Natural killer cell (primary cell): ENCODE measurements at regions of chr3 and their contacts with region 1.

Region 1: DNA sequence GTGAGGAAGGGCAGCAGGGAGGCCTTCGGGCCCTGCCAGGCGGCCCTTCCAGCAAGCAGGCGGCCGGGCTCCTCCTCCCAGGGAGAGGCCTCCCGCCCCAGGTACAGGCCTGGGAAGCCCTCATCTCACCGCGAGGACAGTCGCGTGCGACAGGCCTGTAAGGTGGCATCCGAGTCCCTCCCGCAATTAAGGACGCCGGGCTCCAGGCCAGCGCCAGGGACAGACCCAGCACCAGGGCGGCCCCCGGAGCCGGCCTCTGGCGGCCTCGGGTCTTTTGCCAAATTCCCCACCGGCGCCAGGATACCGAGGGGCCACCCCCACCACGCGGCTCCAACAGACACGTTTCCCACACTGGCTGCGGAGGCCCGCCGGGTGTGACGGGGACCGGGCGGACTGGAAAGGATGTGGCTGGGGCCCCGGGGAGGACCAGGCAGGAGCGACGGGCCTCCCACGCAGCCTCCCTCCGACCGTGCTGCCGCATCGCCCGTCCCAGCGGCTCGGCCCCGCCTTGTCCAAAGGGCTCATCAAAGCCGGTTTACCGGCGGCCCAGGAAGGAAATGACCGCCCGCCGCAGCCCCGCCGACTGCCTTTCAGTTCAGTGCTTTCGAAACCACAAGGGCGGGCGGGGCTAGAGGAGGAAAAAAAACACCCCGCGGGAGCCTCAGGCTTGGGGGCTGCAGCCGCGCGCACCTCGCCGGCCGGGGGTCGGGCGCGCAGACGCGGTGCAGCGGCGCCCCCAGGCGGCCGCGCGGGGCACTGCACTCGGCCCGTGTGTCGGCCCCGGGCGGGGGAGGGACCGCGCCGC is 11.3 kb downstream of the XXYLT1 start:
- DNase-seq: peak; percentile 91 to 94
- ATAC-seq: peak; percentile 86 to 95 (median 89)
- H3K4me3 ChIP-seq: peak overlapping the region; percentile 34
- H3K4me3 Mint-ChIP-seq: peak overlapping the region; percentile 72
- H3K27ac ChIP-seq: peak overlapping the region; percentile 91
- H3K27ac Mint-ChIP-seq: peak overlapping the region; percentile 83 to 84
- H3K4me1 ChIP-seq: peaks cover 25% of the 10 kb centered on the region
- H3K4me1 Mint-ChIP-seq: peaks cover 14 to 23% of the 10 kb centered on the region in 2 donors
- H3K27me3 ChIP-seq: no peaks in the 10 kb centered on the region
- H3K27me3 Mint-ChIP-seq: no peaks in the 10 kb centered on the region
- CTCF ChIP-seq: peak; percentile 71

Region 2: DNA sequence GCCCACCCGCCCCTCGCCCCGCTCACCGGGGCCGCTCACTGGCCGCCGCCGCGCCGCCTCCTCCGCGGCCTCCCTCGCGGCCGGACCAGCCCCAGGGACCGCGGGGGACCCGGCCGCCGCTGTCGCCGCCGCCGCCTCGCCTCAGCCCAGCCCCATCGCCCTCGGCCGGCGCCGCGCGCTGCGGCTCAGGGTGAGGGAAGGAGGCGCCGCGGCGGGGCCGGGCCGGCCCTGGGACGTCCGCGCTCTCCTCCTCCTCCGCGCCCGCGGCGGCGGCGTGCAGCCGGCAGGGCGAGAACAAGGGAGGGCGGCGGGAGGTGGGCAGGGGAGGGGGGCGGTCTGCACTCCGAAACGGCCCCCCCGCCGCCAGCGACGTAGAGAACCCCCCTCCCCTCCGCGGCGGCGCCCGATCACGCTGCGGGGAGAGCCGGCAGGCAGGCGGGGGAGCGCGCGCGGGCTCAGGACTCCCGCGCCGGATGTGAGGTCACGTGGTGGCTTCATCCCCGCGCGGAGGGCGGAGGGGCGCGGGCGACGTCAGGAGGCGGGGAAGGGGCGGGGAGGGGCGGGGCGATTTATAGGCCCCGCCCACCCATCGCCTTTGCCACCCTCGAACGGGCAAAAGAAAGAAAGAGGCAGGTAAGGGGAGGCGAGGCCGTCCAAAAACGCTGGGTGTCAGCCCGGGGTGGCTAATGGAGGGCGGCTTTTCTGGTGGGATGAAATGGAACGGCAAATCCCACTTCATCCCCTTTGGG is 773.0 kb before region 1 on chr3 and contains the start of gene ATP13A3:
- intact Hi-C with region 1: loop called (anchors 10 kb)
- DNase-seq: peak; percentile 87 to 96
- ATAC-seq: peak; percentile 77 to 94 (median 82)
- H3K4me3 ChIP-seq: peak within 1 kb of the TSS; percentile 64
- H3K4me3 Mint-ChIP-seq: peak within 1 kb of the TSS; percentile 95
- H3K27ac ChIP-seq: peak within 1 kb of the TSS; percentile 87
- H3K27ac Mint-ChIP-seq: peak within 1 kb of the TSS; percentile 89 to 90
- H3K4me1 ChIP-seq: peaks cover 31% of the 10 kb centered on the region
- H3K4me1 Mint-ChIP-seq: peaks cover 34 to 40% of the 10 kb centered on the region in 2 donors
- H3K27me3 ChIP-seq: no peaks in the 10 kb centered on the region
- H3K27me3 Mint-ChIP-seq: no peaks in the 10 kb centered on the region
- CTCF ChIP-seq: no peak
- total RNA-seq, gene ATP13A3: 62.9 to 79.2 (median 64.2) TPM

Region 3: GRCh38 chr3:194671900-194672808 is 587.5 kb before region 1 on chr3 and contains the start of gene LSG1:
- intact Hi-C with region 1: loop called (anchors 2 kb)
- DNase-seq: peak; percentile 87 to 97
- ATAC-seq: peak; percentile 96
- H3K4me3 ChIP-seq: peak within 1 kb of the TSS; percentile 97
- H3K4me3 Mint-ChIP-seq: peak within 1 kb of the TSS; percentile 98
- H3K27ac ChIP-seq: peak within 1 kb of the TSS; percentile 98
- H3K27ac Mint-ChIP-seq: peak within 1 kb of the TSS; percentile 98 to 99
- H3K4me1 ChIP-seq: peaks cover 14% of the 10 kb centered on the region
- H3K4me1 Mint-ChIP-seq: peaks cover 29 to 40% of the 10 kb centered on the region in 2 donors
- H3K27me3 ChIP-seq: no peaks in the 10 kb centered on the region
- H3K27me3 Mint-ChIP-seq: peaks cover 0 to 6% of the 10 kb centered on the region in 2 donors
- CTCF ChIP-seq: no peak
- total RNA-seq, gene LSG1: 56.4 to 67.6 (median 64.9) TPM

Region 4: GRCh38 chr3:195001961-195002861 is 257.5 kb before region 1 on chr3:
- intact Hi-C with region 1: loop called (anchors 10 kb)
- DNase-seq: peak in 1 of 2 donors; percentile 41
- ATAC-seq: peak in 1 of 3 donors; percentile 68
- H3K4me3 ChIP-seq: no peak overlapping the region
- H3K4me3 Mint-ChIP-seq: no peak overlapping the region
- H3K27ac ChIP-seq: no peak overlapping the region
- H3K27ac Mint-ChIP-seq: no peak overlapping the region
- H3K4me1 ChIP-seq: peaks cover 18% of the 10 kb centered on the region
- H3K4me1 Mint-ChIP-seq: no peaks in the 10 kb centered on the region
- H3K27me3 ChIP-seq: no peaks in the 10 kb centered on the region
- H3K27me3 Mint-ChIP-seq: peaks cover 7 to 12% of the 10 kb centered on the region in 2 donors
- CTCF ChIP-seq: no peak

Region 5: GRCh38 chr3:195063581-195064193 is 196.0 kb before region 1 on chr3:
- intact Hi-C with region 1: no loop called
- DNase-seq: no peak
- ATAC-seq: no peak
- H3K4me3 ChIP-seq: no peak overlapping the region
- H3K4me3 Mint-ChIP-seq: no peak overlapping the region
- H3K27ac ChIP-seq: no peak overlapping the region
- H3K27ac Mint-ChIP-seq: no peak overlapping the region
- H3K4me1 ChIP-seq: peaks cover 7% of the 10 kb centered on the region
- H3K4me1 Mint-ChIP-seq: peaks cover 0 to 14% of the 10 kb centered on the region in 2 donors
- H3K27me3 ChIP-seq: no peaks in the 10 kb centered on the region
- H3K27me3 Mint-ChIP-seq: peaks cover 0 to 7% of the 10 kb centered on the region in 2 donors
- CTCF ChIP-seq: no peak

Region 6: GRCh38 chr3:195095035-195095703 is 164.5 kb before region 1 on chr3:
- intact Hi-C with region 1: no loop called
- DNase-seq: no peak
- ATAC-seq: no peak
- H3K4me3 ChIP-seq: no peak overlapping the region
- H3K4me3 Mint-ChIP-seq: no peak overlapping the region
- H3K27ac ChIP-seq: peak overlapping the region; percentile 75
- H3K27ac Mint-ChIP-seq: no peak overlapping the region
- H3K4me1 ChIP-seq: peaks cover 29% of the 10 kb centered on the region
- H3K4me1 Mint-ChIP-seq: peaks cover 0 to 9% of the 10 kb centered on the region in 2 donors
- H3K27me3 ChIP-seq: no peaks in the 10 kb centered on the region
- H3K27me3 Mint-ChIP-seq: no peaks in the 10 kb centered on the region
- CTCF ChIP-seq: no peak

Region 7: GRCh38 chr3:195106418-195106906 is 153.2 kb before region 1 on chr3:
- intact Hi-C with region 1: loop called (anchors 1 kb)
- DNase-seq: peak; percentile 74 to 82
- ATAC-seq: peak; percentile 89 to 99 (median 98)
- H3K4me3 ChIP-seq: no peak overlapping the region
- H3K4me3 Mint-ChIP-seq: peak overlapping the region; percentile 43
- H3K27ac ChIP-seq: no peak overlapping the region
- H3K27ac Mint-ChIP-seq: peak overlapping the region in 1 of 2 donors; percentile 55
- H3K4me1 ChIP-seq: peaks cover 14% of the 10 kb centered on the region
- H3K4me1 Mint-ChIP-seq: peaks cover 12 to 15% of the 10 kb centered on the region in 2 donors
- H3K27me3 ChIP-seq: no peaks in the 10 kb centered on the region
- H3K27me3 Mint-ChIP-seq: no peaks in the 10 kb centered on the region
- CTCF ChIP-seq: peak; percentile 99

Region 8: DNA sequence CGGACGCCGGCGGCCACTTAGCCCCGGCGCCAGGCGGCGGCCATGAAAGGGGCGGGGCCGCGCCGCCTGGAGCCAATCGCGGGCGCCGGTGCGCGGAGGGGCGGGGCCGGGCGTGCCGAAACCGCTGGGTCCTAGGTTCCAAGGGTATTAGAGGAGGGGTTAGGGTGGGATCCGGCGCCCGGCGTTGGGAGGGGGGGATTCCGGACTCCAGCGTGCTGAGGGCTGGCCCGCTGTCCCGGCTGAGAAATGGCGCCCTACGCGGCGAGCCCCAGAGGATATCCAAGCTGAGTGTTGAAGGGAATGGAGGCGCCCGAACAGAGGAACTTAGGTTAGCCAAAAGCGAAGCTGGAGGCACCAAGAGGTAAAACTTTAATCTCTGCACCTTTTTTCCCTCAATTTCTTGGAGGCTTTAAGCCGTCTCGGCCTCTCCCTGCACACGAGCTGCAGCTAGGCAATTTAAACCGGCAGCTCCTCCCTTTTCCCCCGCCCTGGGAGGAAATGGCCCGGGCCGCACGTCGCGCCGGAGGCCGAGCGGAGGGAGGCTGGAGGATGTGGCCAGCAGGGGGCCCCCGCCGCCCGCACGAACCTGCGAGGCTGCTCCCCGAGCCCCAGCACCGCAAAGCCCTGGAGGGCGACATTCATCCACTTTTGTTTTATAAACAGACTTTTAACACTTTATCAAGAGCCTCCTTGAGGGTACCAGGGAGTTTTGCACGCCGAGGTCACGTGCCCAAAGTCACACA is 11.6 kb after region 1 on chr3 and contains the start of gene XXYLT1:
- intact Hi-C with region 1: loop called (anchors 1 kb)
- DNase-seq: peak; percentile 90 to 92
- ATAC-seq: peak; percentile 85 to 96 (median 87)
- H3K4me3 ChIP-seq: peak within 1 kb of the TSS; percentile 92
- H3K4me3 Mint-ChIP-seq: peak within 1 kb of the TSS; percentile 90
- H3K27ac ChIP-seq: peak within 1 kb of the TSS; percentile 53
- H3K27ac Mint-ChIP-seq: peak within 1 kb of the TSS; percentile 73 to 84
- H3K4me1 ChIP-seq: peaks cover 23% of the 10 kb centered on the region
- H3K4me1 Mint-ChIP-seq: peaks cover 24 to 25% of the 10 kb centered on the region in 2 donors
- H3K27me3 ChIP-seq: no peaks in the 10 kb centered on the region
- H3K27me3 Mint-ChIP-seq: no peaks in the 10 kb centered on the region
- CTCF ChIP-seq: peak; percentile 77
- total RNA-seq, gene XXYLT1: 8.7 to 13.6 (median 10.2) TPM